ENCODE measurements at regions of chr13 and their contacts with region 1.

Region 1: DNA sequence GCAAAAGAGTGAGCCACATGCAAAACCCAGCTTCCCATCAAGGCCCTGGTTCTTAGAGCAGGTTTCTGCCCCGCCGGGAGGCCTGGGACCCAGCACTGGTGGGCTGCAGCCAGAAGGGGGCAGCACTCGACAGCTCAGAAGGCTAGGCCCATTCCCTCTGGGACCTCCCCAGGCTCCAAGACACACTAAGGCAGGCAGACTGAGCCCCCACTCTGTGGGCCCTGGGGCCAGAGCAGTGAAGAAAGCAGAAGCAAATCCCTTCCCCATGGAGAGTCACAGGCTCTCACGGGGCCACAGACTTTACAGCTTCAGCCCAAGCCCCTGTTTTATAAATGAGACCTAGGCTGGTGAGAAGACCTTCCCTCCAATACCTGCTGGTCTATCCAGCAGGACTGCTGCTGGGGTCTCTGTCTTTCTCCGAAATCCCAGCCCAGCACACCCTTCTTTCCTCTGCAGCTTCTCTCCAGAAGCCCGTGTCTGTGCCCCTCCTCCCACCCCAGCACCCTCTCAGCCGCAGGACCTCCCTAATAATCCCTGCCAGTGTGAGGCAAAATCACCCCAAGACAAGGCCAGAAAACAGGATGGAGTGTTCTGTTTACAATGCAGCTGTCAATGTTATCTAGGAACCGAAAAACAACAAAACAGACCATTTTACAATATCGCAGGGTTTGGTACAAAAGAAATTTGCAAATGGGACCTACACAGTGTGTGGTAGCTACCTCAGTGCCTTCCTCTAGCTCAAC is 109.3 kb downstream of the ABCC4 start:
- DNase-seq: peak; percentile 73
- ATAC-seq: peak; percentile 99
- H3K4me3 ChIP-seq: no peak overlapping the region
- H3K27ac ChIP-seq: no peak overlapping the region
- H3K4me1 ChIP-seq: no peaks in the 10 kb centered on the region
- H3K27me3 ChIP-seq: no peaks in the 10 kb centered on the region
- CTCF ChIP-seq: peak; percentile 88

Region 2: GRCh38 chr13:95176611-95177259 is 15.3 kb before region 1 on chr13:
- CTCF ChIA-PET with region 1: no interaction called
- POLR2A ChIA-PET with region 1: no interaction called
- intact Hi-C with region 1: no loop called
- DNase-seq: no peak
- ATAC-seq: no peak
- H3K4me3 ChIP-seq: no peak overlapping the region
- H3K27ac ChIP-seq: no peak overlapping the region
- H3K4me1 ChIP-seq: no peaks in the 10 kb centered on the region
- H3K27me3 ChIP-seq: no peaks in the 10 kb centered on the region
- CTCF ChIP-seq: no peak

Region 3: GRCh38 chr13:95378603-95379002 is 186.6 kb after region 1 on chr13:
- CTCF ChIA-PET with region 1: interaction called, 9 read pairs
- POLR2A ChIA-PET with region 1: no interaction called
- intact Hi-C with region 1: loop called (anchors 1 kb)
- DNase-seq: peak; percentile 4
- ATAC-seq: no peak
- H3K4me3 ChIP-seq: no peak overlapping the region
- H3K27ac ChIP-seq: no peak overlapping the region
- H3K4me1 ChIP-seq: peaks cover 4% of the 10 kb centered on the region; the same call in 1 of the 2 replicates
- H3K27me3 ChIP-seq: no peaks in the 10 kb centered on the region
- CTCF ChIP-seq: no peak

Region 4: DNA sequence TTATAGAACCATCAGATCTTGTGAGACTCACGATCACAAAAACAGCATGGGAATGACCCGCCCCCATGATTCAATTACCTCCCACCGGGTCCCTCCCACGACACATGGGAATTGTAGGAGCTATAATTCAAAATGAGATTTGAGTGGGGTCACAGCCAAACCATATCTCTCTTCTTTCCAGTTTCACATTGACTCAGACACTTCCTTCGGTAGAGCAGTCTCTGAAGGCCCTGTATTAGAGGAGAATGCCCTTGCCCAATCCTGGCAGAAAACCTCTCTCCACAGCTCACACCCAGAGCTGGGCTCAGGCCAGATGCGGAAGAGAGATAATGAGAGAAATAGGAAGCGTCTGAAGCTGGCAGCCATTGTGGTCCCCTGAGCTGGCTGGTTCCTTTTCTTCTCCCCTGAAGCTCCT is 288.1 kb after region 1 on chr13:
- CTCF ChIA-PET with region 1: no interaction called
- POLR2A ChIA-PET with region 1: no interaction called
- intact Hi-C with region 1: loop called (anchors 1 kb)
- DNase-seq: no peak
- ATAC-seq: no peak
- H3K4me3 ChIP-seq: no peak overlapping the region
- H3K27ac ChIP-seq: no peak overlapping the region
- H3K4me1 ChIP-seq: peaks cover 16% of the 10 kb centered on the region
- H3K27me3 ChIP-seq: no peaks in the 10 kb centered on the region
- CTCF ChIP-seq: no peak